Sciatic nerve (tissue), 2 donors: ENCODE measurements at regions of chr10 and their contacts with region 1.

Region 1: GRCh38 chr10:36559412-36560400 is 565.7 kb upstream of the ANKRD30A start:
- DNase-seq: no peak
- ATAC-seq: peak; percentile 92

Region 2: DNA sequence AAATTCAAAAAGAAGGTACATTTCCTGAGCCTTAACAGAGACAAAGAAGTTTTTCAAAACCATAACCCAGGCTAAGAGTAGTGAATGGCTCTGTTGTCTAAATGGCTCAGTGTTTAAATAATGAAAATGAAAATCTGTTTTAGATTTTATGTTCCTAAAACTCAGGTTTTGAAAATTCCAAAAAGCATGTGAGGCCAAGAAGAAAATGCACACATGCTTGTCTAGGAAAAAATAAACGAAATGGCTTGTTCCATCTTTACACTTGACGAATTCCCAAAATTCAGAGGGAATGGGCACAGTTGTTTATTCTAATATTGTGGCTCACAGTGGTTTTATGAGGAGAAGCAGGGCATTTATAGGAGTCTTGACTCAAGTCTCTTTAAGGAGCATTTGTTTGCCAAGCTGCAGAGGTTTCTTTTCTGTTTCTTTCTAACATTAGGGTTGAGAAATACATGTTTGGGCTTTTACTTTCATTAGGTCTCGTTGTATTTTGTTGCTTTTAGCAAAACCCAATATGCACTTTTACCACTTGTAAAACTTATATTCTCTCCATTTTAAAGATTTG is 38.1 kb after region 1 on chr10:
- intact Hi-C with region 1: no loop called
- DNase-seq: no peak
- ATAC-seq: peak; percentile 57

Region 3: GRCh38 chr10:36621346-36621745 is 61.6 kb after region 1 on chr10:
- intact Hi-C with region 1: no loop called
- DNase-seq: no peak
- ATAC-seq: no peak

Region 4: GRCh38 chr10:37700886-37701780 is 1141.4 kb after region 1 on chr10:
- intact Hi-C with region 1: loop called (anchors 10 kb)
- DNase-seq: peak; percentile 33
- ATAC-seq: peak; percentile 32